ENCODE measurements at regions of chr17 and their contacts with region 1.

Region 1: GRCh38 chr17:78013683-78014467 is 55.4 kb downstream of the TNRC6C start:
- DNase-seq: peak; percentile 63
- CTCF ChIP-seq: peak; percentile 60

Region 2: DNA sequence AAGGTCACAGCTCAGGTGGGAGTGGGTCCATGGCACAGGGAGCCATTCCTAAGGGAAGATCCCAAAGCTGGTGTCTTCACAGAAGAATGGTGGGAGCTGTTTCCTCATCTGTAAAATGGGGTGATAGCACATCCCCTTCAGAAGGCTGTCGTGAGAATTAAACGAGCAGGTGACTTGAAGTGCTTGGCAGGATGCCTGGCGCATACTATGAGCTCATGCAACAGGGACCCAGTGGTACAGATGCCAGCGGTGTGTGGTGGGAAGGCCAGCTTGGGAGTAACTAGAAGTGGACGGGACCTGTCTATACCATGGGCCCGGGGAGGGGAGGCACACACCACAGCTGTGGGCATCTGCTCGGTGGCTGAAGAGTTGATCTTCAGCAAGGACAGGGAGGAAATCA is 244.7 kb before region 1 on chr17:
- in situ Hi-C with region 1: loop called (anchors 10 kb)
- DNase-seq: no peak
- CTCF ChIP-seq: no peak

Region 3: DNA sequence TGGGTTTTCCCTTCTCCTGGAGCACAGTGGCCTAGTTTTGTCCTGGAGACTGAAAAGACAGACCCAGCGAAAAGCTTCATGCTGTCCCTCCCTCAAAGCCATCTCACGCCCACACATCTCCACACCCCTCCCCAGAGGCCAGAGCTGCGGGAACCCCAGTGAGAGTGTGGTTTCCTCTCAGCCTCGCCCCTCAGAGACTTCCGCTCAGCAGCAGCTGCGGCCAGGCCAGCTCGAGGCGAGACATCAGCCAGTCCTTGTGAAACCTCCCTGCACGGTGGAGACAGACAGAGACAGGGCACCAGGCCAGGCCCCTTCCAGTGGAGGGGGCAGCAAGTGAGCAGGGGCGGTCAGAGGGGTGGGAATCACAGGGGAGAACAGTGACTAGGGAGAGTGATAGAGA is 132.3 kb before region 1 on chr17:
- in situ Hi-C with region 1: no loop called
- DNase-seq: peak; percentile 94
- CTCF ChIP-seq: no peak